Activated B cell treated with CpG ODN at 0.5 μM for 24 hours (primary cell): ENCODE measurements at regions of chr1 and their contacts with region 1.

Region 1: GRCh38 chr1:179081687-179082332 is at the start of gene TOR3A:
- DNase-seq: peak; percentile 82
- ATAC-seq: peak; percentile 79
- H3K4me3 Mint-ChIP-seq: peak within 1 kb of the TSS; percentile 98
- H3K27ac Mint-ChIP-seq: peak within 1 kb of the TSS; percentile 96
- H3K4me1 Mint-ChIP-seq: peaks cover 44% of the 10 kb centered on the region
- H3K27me3 Mint-ChIP-seq: no peaks in the 10 kb centered on the region
- CTCF ChIP-seq: no peak
- total RNA-seq, gene TOR3A: 59.5 and 60.8 TPM in 2 replicates

Region 2: GRCh38 chr1:178532392-178532791 is 549.4 kb before region 1 on chr1:
- CTCF ChIA-PET with region 1: interaction called, 4 read pairs
- POLR2A ChIA-PET with region 1: no interaction called
- intact Hi-C with region 1: loop called (anchors 2 kb)
- DNase-seq: peak; percentile 77
- ATAC-seq: peak; percentile 93
- H3K4me3 Mint-ChIP-seq: no peak overlapping the region
- H3K27ac Mint-ChIP-seq: no peak overlapping the region
- H3K4me1 Mint-ChIP-seq: peaks cover 4% of the 10 kb centered on the region
- H3K27me3 Mint-ChIP-seq: no peaks in the 10 kb centered on the region
- CTCF ChIP-seq: peak; percentile 84

Region 3: GRCh38 chr1:179034720-179035119 is 47.1 kb before region 1 on chr1:
- CTCF ChIA-PET with region 1: no interaction called
- POLR2A ChIA-PET with region 1: interaction called, 4 read pairs
- intact Hi-C with region 1: loop called (anchors 2 kb)
- DNase-seq: no peak
- ATAC-seq: peak; percentile 80
- H3K4me3 Mint-ChIP-seq: peak overlapping the region; percentile 63
- H3K27ac Mint-ChIP-seq: peak overlapping the region; percentile 87
- H3K4me1 Mint-ChIP-seq: peaks cover 89% of the 10 kb centered on the region
- H3K27me3 Mint-ChIP-seq: no peaks in the 10 kb centered on the region
- CTCF ChIP-seq: no peak

Region 4: DNA sequence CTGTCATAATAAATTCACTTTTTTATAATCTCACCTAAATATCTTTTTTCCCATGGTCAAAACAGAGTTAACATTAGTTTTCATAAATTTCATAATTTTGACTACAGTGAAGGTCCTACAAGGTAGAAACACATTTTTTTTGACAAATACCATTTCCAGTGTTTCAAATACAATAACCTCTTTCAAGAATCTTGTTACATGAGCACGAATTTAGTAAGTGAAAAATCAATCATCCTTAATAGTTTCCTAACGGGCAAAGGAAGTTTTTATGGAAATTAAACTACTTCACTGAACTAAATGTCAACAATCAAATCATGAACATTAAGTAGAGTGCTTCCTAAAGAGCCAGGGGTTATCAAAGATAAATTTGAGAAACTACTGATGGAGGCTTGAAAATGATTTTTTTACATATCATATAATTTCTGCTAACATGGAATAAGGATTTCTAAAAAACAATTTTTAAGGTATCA is 112.3 kb after region 1 on chr1:
- CTCF ChIA-PET with region 1: no interaction called
- POLR2A ChIA-PET with region 1: no interaction called
- intact Hi-C with region 1: loop called (anchors 2 kb)
- DNase-seq: no peak
- ATAC-seq: no peak
- H3K4me3 Mint-ChIP-seq: no peak overlapping the region
- H3K27ac Mint-ChIP-seq: no peak overlapping the region
- H3K4me1 Mint-ChIP-seq: peaks cover 11% of the 10 kb centered on the region
- H3K27me3 Mint-ChIP-seq: no peaks in the 10 kb centered on the region
- CTCF ChIP-seq: no peak

Region 5: GRCh38 chr1:179447489-179447888 is 365.7 kb after region 1 on chr1:
- CTCF ChIA-PET with region 1: no interaction called
- POLR2A ChIA-PET with region 1: no interaction called
- intact Hi-C with region 1: loop called (anchors 1 kb)
- DNase-seq: no peak
- ATAC-seq: no peak
- H3K4me3 Mint-ChIP-seq: no peak overlapping the region
- H3K27ac Mint-ChIP-seq: no peak overlapping the region
- H3K4me1 Mint-ChIP-seq: no peaks in the 10 kb centered on the region
- H3K27me3 Mint-ChIP-seq: peaks cover 8% of the 10 kb centered on the region
- CTCF ChIP-seq: no peak

Region 6: DNA sequence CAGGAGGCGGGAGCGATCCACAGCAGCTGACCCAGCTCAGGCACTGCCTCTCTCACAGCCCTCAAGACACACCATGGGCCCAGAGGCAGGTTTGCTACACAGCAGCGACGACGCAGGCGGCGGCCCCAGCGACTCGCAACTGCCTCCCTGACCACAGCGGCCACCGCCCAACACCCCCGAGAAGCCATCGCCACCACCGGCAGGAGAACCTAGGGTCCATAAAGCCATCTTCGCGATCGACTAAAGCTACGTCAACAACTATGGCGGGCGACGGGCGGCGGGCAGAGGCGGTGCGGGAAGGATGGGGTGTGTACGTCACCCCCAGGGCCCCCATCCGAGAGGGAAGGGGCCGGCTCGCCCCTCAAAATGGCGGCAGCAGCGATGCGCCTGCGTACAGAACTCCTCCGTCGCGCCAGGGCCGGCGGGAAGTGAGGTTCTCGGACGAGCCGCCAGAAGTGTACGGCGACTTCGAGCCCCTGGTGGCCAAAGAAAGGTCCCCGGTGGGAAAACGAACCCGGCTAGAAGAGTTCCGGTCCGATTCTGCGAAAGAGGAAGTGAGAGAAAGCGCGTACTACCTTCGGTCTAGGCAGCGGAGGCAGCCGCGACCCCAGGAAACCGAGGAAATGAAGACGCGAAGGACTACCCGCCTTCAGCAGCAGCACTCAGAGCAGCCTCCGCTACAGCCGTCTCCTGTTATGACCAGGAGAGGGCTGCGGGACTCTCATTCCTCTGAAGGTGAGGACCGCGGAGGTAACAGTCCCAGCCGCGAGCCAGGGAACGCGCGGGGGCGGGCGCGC is 800.6 kb after region 1 on chr1 and contains the start of gene TOR1AIP1:
- CTCF ChIA-PET with region 1: no interaction called
- POLR2A ChIA-PET with region 1: no interaction called
- intact Hi-C with region 1: loop called (anchors 5 kb)
- DNase-seq: peak; percentile 96
- ATAC-seq: peak; percentile 76
- H3K4me3 Mint-ChIP-seq: peak within 1 kb of the TSS; percentile 100
- H3K27ac Mint-ChIP-seq: peak within 1 kb of the TSS; percentile 100
- H3K4me1 Mint-ChIP-seq: peaks cover 64% of the 10 kb centered on the region
- H3K27me3 Mint-ChIP-seq: no peaks in the 10 kb centered on the region
- CTCF ChIP-seq: no peak
- total RNA-seq, gene TOR1AIP1: 42.3 and 46.6 TPM in 2 replicates